Activated T-helper 2 cell treated with anti-CD3 and anti-CD28 coated beads, Interferon-gamma antibody, Interleukin-2, Interleukin-4, amounts not matched to agents 10 μg/mL and 5 μg/mL and 100 μg/mL, durations not matched to agents 14 hours and 24 hours and 36 hours (primary cell): ENCODE measurements at regions of chr9 and their contacts with region 1.

Region 1: DNA sequence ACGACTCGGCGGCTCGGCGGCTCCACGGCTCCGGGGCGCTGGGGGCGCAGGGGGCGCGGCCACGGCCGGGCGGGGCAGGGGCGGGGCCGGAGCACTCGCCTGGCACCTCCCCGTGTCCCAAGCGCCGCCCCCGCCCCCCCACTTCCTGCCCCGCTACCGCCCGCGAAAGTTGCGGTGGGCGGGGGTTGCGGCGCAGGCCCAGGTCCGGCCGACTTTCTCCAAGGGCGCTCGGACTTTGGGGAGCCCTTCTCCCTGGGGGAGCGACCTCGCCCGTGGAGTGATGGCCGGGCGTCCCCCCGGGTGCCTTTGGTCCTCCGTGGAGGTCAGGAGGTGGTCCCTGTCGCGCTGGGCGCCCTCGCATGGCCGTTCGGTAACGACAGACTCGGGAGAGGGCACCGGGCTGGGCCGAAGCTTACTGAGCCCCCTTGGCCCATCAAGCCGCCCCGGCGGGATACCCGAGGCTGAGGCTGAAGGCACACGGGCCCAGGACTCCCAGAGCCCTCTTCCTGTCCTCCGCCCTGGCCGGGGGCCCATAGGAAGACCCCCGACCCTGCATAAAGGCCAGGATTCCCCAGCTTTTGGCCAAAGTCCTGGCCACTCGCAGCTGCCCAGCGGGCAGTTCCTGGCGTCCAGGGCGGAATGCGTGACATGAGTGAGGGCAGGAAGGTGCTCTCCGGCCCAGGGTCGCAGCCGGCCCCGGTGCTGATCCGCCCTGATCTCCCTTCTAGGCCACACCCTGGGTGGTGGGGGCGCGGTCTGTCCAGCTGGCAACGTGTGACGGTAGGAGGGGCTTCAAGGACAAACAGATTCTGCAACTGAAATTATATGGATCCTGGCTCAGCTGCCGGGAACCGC is 883 bp upstream of the VAV2 start:
- DNase-seq: peak; percentile 62
- H3K4me3 Mint-ChIP-seq: peak overlapping the region; percentile 68
- H3K27ac Mint-ChIP-seq: no peak overlapping the region
- H3K4me1 Mint-ChIP-seq: no peaks in the 10 kb centered on the region
- H3K27me3 Mint-ChIP-seq: peaks cover 20% of the 10 kb centered on the region

Region 2: DNA sequence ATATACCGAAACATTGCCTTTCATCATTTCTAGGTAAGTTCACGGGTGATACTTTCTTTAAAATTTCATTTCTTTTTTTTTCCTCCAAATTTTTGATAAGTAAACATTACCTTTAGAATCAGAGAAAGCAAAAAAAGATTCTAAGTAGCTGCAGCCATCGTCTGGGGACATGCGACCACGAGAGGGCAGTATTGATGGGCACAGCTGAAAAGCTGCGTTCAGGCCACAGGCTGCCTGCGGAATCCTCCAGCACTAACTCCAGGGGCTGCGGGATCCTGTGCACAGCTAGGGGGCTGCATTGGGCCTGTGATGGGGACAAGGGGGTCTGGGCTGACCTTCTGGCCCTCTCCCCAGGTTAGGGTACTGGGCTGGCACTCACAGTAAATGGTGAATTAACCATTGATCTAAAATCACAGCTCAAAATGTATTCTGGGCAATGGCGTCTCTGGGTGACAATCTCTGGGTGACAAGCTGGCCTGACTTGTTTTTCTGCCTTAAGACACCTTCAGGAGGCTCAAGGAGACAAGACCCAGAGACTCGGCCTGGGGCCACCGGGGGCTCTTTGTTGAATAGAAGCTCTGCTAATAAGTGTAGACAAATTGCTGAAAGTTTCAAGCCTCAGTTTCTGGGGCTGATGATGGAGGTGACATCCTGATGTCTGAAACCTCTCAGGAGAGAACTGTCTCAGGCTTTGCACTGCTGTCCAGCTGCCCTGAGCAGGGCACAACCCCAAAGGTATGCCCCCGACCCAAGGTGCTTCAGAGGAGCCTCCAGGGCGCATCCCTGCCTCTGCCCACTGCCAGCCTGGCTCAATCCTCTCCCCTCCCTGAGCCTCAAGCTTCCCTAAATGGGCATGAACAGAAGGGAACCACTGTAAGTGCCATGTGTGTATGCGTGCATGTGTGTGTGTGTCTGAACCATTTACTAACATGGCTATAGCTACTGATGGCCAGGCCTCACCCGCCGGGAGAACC is 210.6 kb before region 1 on chr9:
- intact Hi-C with region 1: loop called (anchors 2 kb)
- DNase-seq: peak; percentile 50
- H3K4me3 Mint-ChIP-seq: no peak overlapping the region
- H3K27ac Mint-ChIP-seq: no peak overlapping the region
- H3K4me1 Mint-ChIP-seq: peaks cover 2% of the 10 kb centered on the region
- H3K27me3 Mint-ChIP-seq: no peaks in the 10 kb centered on the region

Region 3: DNA sequence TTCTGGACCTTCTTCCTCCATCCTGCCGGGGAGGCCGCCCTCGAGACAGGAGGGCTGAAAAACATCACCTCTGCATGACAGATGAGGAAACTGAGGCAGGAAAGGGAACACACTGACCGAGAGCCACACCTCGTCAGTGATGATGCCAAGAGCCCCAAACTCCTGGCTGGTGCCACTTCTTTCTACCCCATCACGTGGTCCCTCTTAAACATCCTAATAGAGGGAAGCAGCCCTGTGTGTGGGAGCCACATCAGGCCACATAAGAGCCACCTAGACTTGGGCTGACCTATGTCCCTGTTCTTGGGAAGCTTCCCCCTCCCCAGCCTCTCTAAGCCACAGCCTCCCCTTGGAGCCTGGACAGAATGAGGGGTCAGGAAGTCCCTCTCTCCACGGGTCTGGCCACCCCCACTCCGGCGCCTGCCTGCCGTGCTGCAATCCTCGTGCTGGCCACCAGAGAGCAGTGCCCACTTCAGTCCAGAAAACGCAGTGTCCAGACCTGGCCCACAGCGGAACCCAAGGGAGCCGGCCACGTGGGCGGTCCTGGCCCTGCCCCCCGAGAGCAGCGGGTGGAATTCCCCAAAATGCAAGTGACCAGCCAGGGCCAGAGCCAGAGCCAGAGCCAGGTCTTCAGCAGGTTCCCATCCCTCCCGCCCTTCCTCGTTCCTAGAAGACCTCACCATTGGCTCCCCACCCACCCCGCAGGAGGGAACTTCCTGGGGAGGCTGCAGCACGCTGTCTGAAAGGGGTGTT is 200.1 kb before region 1 on chr9:
- intact Hi-C with region 1: loop called (anchors 1 kb)
- DNase-seq: peak; percentile 34
- H3K4me3 Mint-ChIP-seq: no peak overlapping the region
- H3K27ac Mint-ChIP-seq: no peak overlapping the region
- H3K4me1 Mint-ChIP-seq: peaks cover 3% of the 10 kb centered on the region
- H3K27me3 Mint-ChIP-seq: no peaks in the 10 kb centered on the region

Region 4: DNA sequence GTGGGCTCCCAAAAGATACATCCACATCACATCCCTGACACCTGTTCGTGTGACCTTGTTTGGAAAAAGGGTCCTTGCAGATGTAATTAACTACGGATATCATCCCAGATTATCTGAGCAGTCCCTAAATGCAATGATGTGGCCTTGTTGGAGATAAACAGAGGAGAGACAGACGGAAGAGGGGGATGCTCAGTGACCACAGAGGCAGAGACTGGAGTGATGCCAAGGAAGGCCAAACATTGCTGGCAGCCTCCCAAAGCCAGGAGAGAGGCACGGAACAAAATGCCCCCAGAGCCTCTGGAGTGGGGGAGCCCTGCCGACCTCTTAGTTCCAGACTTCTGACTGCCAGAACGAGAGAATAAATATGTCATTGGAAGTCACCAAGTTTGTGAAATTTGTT is 14.1 kb after region 1 on chr9:
- intact Hi-C with region 1: no loop called
- DNase-seq: no peak
- H3K4me3 Mint-ChIP-seq: no peak overlapping the region
- H3K27ac Mint-ChIP-seq: no peak overlapping the region
- H3K4me1 Mint-ChIP-seq: no peaks in the 10 kb centered on the region
- H3K27me3 Mint-ChIP-seq: no peaks in the 10 kb centered on the region

Region 5: GRCh38 chr9:134024828-134025605 is 32.0 kb after region 1 on chr9 and contains the start of gene BRD3OS:
- intact Hi-C with region 1: loop called (anchors 2 kb)
- DNase-seq: peak; percentile 90
- H3K4me3 Mint-ChIP-seq: peak within 1 kb of the TSS; percentile 72
- H3K27ac Mint-ChIP-seq: no peak within 1 kb of the TSS
- H3K4me1 Mint-ChIP-seq: peaks cover 4% of the 10 kb centered on the region
- H3K27me3 Mint-ChIP-seq: peaks cover 3% of the 10 kb centered on the region
- total RNA-seq, gene BRD3OS: 12.3 and 15.8 TPM in 2 replicates

Region 6: DNA sequence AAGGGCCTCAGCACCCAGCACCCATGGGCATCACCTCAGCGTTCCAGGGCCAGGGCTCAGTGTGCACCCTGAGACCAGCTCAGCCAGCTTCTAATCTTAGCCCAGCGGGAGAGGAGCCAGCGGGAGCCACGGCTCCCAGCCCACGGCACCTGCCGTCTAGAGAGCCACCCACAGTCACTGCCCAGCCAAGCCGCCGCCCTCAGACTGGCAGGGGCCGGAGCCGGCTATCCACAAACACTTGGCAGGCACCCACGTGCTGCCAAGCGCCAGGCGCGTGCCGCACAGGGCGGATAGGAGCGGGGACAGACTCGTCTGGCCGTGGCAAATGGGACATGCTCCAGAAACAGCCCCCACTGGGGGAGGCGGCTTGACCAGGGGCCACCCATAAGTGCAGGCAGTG is 56.2 kb after region 1 on chr9:
- intact Hi-C with region 1: no loop called
- DNase-seq: no peak
- H3K4me3 Mint-ChIP-seq: no peak overlapping the region
- H3K27ac Mint-ChIP-seq: no peak overlapping the region
- H3K4me1 Mint-ChIP-seq: no peaks in the 10 kb centered on the region
- H3K27me3 Mint-ChIP-seq: no peaks in the 10 kb centered on the region